Aorta (tissue), 5 donors: ENCODE measurements at regions of chr1 and their contacts with region 1.

Region 1: GRCh38 chr1:226702957-226703831 is 35.9 kb downstream of the ITPKB start:
- DNase-seq: peak; percentile 87 to 93
- ATAC-seq: peak; percentile 92
- H3K4me3 ChIP-seq: peak overlapping the region; percentile 57 to 68
- H3K27ac ChIP-seq: peak overlapping the region; percentile 94 to 97
- H3K4me1 ChIP-seq: no peaks in the 10 kb centered on the region
- H3K27me3 ChIP-seq: no peaks in the 10 kb centered on the region

Region 2: GRCh38 chr1:226438007-226438406 is 265.2 kb before region 1 on chr1:
- intact Hi-C with region 1: no loop called
- DNase-seq: no peak
- ATAC-seq: no peak
- H3K4me3 ChIP-seq: no peak overlapping the region
- H3K27ac ChIP-seq: no peak overlapping the region
- H3K4me1 ChIP-seq: no peaks in the 10 kb centered on the region
- H3K27me3 ChIP-seq: no peaks in the 10 kb centered on the region

Region 3: GRCh38 chr1:226662642-226663326 is 40.4 kb before region 1 on chr1:
- intact Hi-C with region 1: loop called in 1 of 2 experiments (anchors 5 kb)
- DNase-seq: peak; percentile 88 to 90
- ATAC-seq: peak; percentile 77
- H3K4me3 ChIP-seq: no peak overlapping the region
- H3K27ac ChIP-seq: peak overlapping the region; percentile 97 to 100
- H3K4me1 ChIP-seq: peaks cover 0 to 5% of the 10 kb centered on the region in 2 donors
- H3K27me3 ChIP-seq: no peaks in the 10 kb centered on the region